ENCODE measurements at regions of chr17 and their contacts with region 1.

Region 1: DNA sequence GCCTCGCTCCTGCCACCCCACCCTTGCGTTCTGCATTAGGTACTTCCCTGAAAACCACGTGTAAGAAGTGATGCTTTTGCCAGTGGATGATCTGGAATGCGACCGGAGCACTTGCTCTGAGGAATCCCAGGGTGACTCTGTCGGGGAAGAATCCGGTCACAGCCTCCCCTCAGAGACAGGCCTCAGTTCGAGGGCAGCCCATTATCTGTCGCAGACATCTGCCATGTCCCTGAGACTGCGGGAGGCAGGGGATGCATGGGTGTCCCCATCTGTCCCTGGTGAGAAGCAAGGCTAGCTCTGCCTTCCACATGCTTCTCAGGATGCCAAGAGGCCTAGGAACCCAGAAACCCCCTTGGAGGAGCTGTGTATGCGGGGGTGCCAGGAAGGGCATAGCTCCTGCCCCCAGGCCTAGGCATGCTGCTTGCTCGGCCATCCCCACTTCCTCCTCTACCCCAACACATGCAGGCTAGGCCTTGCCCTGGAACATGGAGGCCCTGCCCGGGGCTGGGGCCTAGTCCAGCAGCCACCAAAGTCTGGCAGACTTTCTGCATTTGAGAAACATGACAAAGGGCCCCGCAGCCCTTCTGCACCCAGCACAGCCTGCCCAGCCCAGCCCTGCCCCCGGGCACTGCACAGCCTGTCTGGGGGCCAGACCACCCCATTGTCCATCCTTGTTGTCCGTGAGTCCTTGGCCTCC is 20.5 kb downstream of the MNT start:
- DNase-seq: no peak
- ATAC-seq: no peak
- H3K4me3 ChIP-seq: no peak overlapping the region
- H3K27ac ChIP-seq: 0 out of 6 replicates have a peak overlapping the region, but pooled peaks of 1 of the 2 experiments have one; percentile 10
- H3K4me1 ChIP-seq: peaks cover 5% of the 10 kb centered on the region; the same call in 1 of the 3 replicates
- CTCF ChIP-seq: no peak
- EP300 ChIP-seq: no peak
- POLR2A ChIP-seq: no peak
- RAD21 ChIP-seq: no peak

Region 2: DNA sequence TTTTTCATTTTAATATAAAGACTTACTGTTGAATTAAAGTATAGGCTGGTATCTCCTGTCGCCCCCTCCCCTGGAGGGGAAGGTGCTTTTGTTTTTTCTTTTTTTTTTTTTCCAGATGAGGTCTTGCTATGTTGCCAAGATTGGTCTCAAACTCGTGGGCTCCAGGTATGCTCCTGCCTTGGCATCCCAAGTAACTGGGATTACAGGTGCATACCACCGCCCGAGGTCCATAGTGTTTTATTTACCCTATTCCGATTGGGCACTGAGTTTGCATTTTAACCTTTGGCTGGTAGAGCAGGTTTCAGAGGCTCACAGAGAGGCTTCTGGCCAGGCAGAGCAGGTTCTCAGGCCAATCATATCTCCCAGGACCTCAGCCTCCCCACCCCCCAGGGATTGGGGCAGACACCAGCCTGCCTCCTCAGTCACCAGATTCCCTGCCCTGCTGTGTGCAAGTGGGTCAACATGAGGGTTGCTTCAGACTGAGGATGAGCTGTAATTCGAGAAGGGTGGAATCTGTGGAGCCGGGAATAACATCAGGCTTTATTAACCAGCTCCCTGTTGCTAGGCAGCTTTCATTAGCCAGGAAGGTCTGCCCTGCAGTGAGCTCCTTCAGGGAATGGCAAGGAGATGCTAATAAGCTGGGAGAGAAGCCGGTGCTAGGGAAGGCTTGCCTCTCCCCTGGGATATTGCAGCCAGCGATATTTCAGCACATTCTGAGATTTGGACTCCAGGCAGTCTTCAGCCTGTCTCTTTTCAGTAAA is 32.6 kb before region 1 on chr17:
- CTCF ChIA-PET with region 1: interaction called, 57 read pairs
- POLR2A ChIA-PET with region 1: no interaction called
- DNase-seq: peak; percentile 47 to 84
- ATAC-seq: peak; percentile 78 to 87
- H3K4me3 ChIP-seq: no peak overlapping the region
- H3K27ac ChIP-seq: peak overlapping the region; percentile 14 to 77; a peak in 4 of 6 replicates
- H3K4me1 ChIP-seq: peaks cover 14% of the 10 kb centered on the region
- CTCF ChIP-seq: no peak
- EP300 ChIP-seq: no peak
- POLR2A ChIP-seq: no peak
- RAD21 ChIP-seq: no peak

Region 3: GRCh38 chr17:2392252-2393173 is 12.1 kb after region 1 on chr17:
- CTCF ChIA-PET with region 1: interaction called, 1,099 read pairs
- POLR2A ChIA-PET with region 1: interaction called, 41 read pairs
- DNase-seq: peak; percentile 93 to 98
- ATAC-seq: peak; percentile 30 to 55
- H3K4me3 ChIP-seq: peak overlapping the region; percentile 66
- H3K27ac ChIP-seq: peak overlapping the region; percentile 97 to 99
- H3K4me1 ChIP-seq: peaks cover 43% of the 10 kb centered on the region
- CTCF ChIP-seq: no peak
- EP300 ChIP-seq: peak in 1 of 2 experiments; percentile 70; a peak in 2 of 5 replicates
- POLR2A ChIP-seq: peak; percentile 38
- RAD21 ChIP-seq: peak in 1 of 2 experiments; percentile 16; a peak in 1 of 5 replicates

Region 4: GRCh38 chr17:2435181-2435741 is 54.9 kb after region 1 on chr17:
- CTCF ChIA-PET with region 1: interaction called, 33 read pairs
- POLR2A ChIA-PET with region 1: no interaction called
- DNase-seq: no peak
- ATAC-seq: no peak
- H3K4me3 ChIP-seq: no peak overlapping the region
- H3K27ac ChIP-seq: no peak overlapping the region
- H3K4me1 ChIP-seq: no peaks in the 10 kb centered on the region
- CTCF ChIP-seq: no peak
- EP300 ChIP-seq: no peak
- POLR2A ChIP-seq: no peak
- RAD21 ChIP-seq: no peak

Region 5: GRCh38 chr17:2624292-2624731 is 243.9 kb after region 1 on chr17:
- CTCF ChIA-PET with region 1: no interaction called
- POLR2A ChIA-PET with region 1: no interaction called
- DNase-seq: no peak
- ATAC-seq: no peak
- H3K4me3 ChIP-seq: no peak overlapping the region
- H3K27ac ChIP-seq: no peak overlapping the region
- H3K4me1 ChIP-seq: 0 out of 3 replicates have a peak, but pooled peaks cover 4% of the 10 kb centered on the region
- CTCF ChIP-seq: no peak
- EP300 ChIP-seq: no peak
- POLR2A ChIP-seq: no peak
- RAD21 ChIP-seq: no peak

Measured in A549 (cell line).